ENCODE measurements at regions of chr17 and their contacts with region 1.

Region 1: GRCh38 chr17:11144358-11145233 is 96.4 kb upstream of the SHISA6 start:
- DNase-seq: no peak
- ATAC-seq: no peak

Region 2: GRCh38 chr17:10532026-10532425 is 612.6 kb before region 1 on chr17:
- intact Hi-C with region 1: no loop called
- DNase-seq: no peak
- ATAC-seq: no peak

Region 3: GRCh38 chr17:10875979-10876555 is 268.5 kb before region 1 on chr17:
- intact Hi-C with region 1: loop called (anchors 2 kb)
- DNase-seq: no peak
- ATAC-seq: no peak